ENCODE measurements at regions of chr3 and their contacts with region 1.

Region 1: DNA sequence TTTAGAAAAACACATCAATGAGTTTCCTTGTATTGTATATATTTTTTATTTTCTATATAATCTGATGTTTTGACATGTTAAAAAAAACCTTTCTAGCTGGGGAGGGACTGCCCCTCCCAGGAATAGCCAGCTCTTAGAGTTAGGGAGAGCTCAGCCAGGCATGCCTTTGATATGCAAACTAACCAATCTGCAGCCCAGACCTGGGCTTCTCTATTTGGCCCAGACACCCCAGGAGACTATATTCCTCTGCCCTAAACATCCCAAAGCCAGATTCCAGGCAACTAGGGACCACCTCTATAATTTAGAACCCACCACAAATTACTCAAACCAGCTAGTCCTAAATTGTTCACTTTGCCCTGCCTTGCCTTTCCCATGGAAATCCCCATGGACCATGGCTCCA is 390.9 kb upstream of the ADAMTS9 start:
- DNase-seq: no peak
- ATAC-seq: no peak
- H3K4me3 ChIP-seq: no peak overlapping the region
- H3K27ac ChIP-seq: no peak overlapping the region
- H3K4me1 ChIP-seq: no peaks in the 10 kb centered on the region; a peak in 1 of 5 replicates
- H3K27me3 ChIP-seq: no peaks in the 10 kb centered on the region
- CTCF ChIP-seq: no peak
- EP300 ChIP-seq: no peak
- POLR2A ChIP-seq: no peak
- RAD21 ChIP-seq: no peak

Region 2: DNA sequence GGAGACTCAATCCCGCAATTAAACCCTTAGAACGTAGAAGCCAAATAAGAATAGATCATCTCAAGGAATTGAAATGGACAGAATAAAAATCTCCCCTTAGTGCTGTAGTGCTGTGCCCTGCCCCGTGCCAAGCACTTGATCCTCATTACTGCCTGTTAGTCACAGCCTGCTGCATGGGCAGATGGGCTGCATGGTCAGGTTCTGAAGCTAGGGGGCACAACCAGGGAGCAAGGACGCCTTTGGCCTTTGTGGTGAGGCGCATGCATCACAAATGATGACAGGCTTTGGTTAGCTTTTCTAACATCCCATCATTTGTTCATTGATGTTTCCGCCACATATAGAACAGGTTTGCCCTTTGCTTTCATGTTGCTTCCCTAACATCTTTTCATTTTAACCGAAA is 54.6 kb before region 1 on chr3:
- CTCF ChIA-PET with region 1: no interaction called
- POLR2A ChIA-PET with region 1: no interaction called
- in situ Hi-C with region 1: no loop called
- intact Hi-C with region 1: loop called (anchors 2 kb)
- DNase-seq: no peak
- ATAC-seq: no peak
- H3K4me3 ChIP-seq: no peak overlapping the region
- H3K27ac ChIP-seq: no peak overlapping the region
- H3K4me1 ChIP-seq: peaks cover 0 to 5% of the 10 kb centered on the region in 2 experiments; a peak in 2 of 5 replicates
- H3K27me3 ChIP-seq: no peaks in the 10 kb centered on the region
- CTCF ChIP-seq: peak; percentile 10 to 30 (median 28); a peak in 2 of 6 replicates
- EP300 ChIP-seq: no peak
- POLR2A ChIP-seq: no peak
- RAD21 ChIP-seq: no peak

Region 3: GRCh38 chr3:65039754-65040210 is 39.0 kb before region 1 on chr3:
- CTCF ChIA-PET with region 1: no interaction called
- POLR2A ChIA-PET with region 1: no interaction called
- in situ Hi-C with region 1: no loop called
- intact Hi-C with region 1: no loop called
- DNase-seq: peak; percentile 71 to 93 (median 84)
- ATAC-seq: peak; percentile 96
- H3K4me3 ChIP-seq: no peak overlapping the region
- H3K27ac ChIP-seq: peak overlapping the region; percentile 98
- H3K4me1 ChIP-seq: peaks cover 5 to 41% of the 10 kb centered on the region in 2 experiments; a peak in 3 of 5 replicates
- H3K27me3 ChIP-seq: no peaks in the 10 kb centered on the region
- CTCF ChIP-seq: no peak
- EP300 ChIP-seq: peak; percentile 99
- POLR2A ChIP-seq: no peak
- RAD21 ChIP-seq: no peak

Measured in K562 (cell line).